Mammary epithelial cell (primary cell): ENCODE measurements at regions of chr5 and their contacts with region 1.

Region 1: DNA sequence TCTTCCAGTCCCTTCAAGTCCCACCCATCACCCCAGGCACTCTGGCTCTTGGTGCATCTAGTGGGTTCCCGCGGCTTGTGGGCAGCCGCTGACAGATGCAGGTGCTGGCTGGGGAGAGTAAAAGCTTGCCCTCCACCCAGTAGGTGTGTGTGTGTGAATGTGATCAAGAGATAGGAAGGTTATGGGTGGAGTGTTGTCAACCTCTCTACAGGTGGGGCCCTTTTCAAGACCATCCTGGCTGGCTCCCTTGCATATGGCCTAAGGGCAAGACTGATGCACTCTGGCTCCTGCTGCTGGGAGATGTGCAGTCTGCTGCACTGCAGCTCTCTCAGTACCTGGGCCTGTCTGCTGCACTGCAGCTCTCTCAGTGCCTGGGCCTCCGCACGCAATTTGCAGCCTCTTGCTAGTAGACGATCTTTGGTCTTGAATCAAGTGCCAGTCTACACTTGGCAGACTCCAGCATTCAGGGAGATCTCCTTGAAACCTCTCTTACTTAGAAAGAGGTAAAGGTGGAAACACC is 189.7 kb upstream of the GDNF start:
- DNase-seq: peak; percentile 19
- H3K4me3 ChIP-seq: no peak overlapping the region
- H3K27ac ChIP-seq: no peak overlapping the region
- H3K4me1 ChIP-seq: peaks cover 7% of the 10 kb centered on the region
- H3K27me3 ChIP-seq: no peaks in the 10 kb centered on the region
- CTCF ChIP-seq: no peak

Region 2: DNA sequence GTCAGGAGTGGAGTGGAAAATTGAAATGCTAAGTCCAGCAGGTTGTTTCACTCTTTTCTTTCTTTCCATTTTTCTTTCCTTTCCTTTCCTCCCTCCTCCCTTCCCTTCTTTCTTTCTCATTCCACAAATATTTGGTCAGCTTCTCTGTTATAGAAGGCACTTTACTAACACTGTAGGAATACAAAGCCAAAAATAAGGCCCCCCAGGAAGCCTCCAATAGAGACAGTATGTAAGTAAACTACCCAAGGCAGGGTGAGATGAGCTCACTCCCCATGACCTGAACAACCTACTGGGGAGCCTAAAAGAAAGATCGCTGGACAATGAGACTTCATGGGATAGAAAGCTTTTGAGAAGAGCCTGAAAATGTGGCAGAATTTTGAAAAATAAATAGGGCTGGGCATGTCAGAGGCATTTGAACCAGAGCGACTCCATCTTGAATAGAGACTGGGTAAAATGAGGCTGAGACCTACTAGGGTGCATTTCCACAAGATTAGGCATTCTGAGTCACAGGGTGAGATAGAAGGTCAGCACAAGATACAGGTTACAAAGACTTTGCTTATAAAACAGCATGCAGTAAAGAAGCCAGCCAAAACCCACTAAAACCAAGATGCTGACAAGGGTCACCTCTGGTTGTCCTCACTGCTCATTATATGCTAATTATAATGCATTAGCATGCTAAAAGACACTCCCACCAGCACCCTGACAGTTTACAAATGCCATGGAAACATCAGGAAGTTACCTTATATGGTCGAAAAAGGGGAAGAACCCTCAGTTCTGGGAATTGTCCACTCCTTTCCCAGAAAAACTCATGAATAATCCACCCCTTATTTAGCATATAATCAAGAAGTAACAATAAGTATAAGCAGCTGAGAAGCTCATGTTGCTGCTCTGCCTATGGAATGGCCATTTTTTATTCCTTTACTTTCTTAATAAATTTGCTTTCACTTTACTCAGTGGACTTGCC is 69.9 kb after region 1 on chr5:
- CTCF ChIA-PET with region 1: no interaction called
- dilution Hi-C with region 1: loop called (anchors 5 kb)
- in situ Hi-C with region 1: no loop called
- intact Hi-C with region 1: no loop called
- DNase-seq: no peak
- H3K4me3 ChIP-seq: no peak overlapping the region
- H3K27ac ChIP-seq: no peak overlapping the region
- H3K4me1 ChIP-seq: no peaks in the 10 kb centered on the region
- H3K27me3 ChIP-seq: peaks cover 5% of the 10 kb centered on the region
- CTCF ChIP-seq: no peak